ENCODE measurements at regions of chr18 and their contacts with region 1.

Region 1: DNA sequence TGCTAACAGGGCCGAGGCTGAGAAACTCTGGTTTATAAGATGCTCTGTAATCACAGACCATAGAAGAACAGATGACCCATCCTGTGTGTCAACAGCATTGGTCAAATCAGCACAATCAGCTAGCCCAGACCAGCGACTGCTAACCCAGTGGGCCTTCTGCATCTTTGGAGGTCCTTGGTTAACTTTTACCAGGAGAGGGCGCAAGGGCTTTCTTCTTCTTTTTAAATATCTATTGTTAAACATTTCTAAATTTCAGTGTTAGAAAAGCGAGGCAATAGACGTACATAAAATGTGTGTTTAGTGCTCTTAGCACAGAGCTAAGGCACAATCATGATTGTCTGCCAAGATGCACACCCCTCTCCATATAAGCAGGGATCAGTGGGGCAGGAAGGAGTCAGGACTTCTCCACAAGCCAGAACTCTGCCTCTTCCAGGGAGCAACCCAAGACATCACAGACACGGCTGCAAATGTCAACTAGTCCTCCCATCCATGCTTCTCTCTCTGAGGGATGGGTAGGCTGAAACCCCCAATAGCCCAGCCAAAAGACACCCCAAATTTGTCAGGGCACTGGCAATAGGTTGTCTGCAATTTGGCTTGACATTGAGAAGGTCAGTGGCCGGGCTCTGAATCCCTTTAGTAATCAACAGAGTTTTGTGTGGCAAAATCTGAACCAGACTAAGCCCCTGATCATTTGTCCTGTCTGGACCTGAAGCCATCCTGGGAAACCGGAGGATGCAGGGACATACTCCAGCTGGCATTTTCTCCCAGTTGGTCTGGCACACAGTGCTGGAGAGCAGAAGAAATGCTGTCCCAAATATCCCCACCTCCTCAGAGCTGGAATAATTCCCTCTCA is 188.2 kb downstream of the BCL2 start:
- DNase-seq: no peak

Region 2: GRCh38 chr18:63025251-63026090 is 105.9 kb before region 1 on chr18:
- intact Hi-C with region 1: loop called (anchors 5 kb)
- DNase-seq: no peak

Region 3: DNA sequence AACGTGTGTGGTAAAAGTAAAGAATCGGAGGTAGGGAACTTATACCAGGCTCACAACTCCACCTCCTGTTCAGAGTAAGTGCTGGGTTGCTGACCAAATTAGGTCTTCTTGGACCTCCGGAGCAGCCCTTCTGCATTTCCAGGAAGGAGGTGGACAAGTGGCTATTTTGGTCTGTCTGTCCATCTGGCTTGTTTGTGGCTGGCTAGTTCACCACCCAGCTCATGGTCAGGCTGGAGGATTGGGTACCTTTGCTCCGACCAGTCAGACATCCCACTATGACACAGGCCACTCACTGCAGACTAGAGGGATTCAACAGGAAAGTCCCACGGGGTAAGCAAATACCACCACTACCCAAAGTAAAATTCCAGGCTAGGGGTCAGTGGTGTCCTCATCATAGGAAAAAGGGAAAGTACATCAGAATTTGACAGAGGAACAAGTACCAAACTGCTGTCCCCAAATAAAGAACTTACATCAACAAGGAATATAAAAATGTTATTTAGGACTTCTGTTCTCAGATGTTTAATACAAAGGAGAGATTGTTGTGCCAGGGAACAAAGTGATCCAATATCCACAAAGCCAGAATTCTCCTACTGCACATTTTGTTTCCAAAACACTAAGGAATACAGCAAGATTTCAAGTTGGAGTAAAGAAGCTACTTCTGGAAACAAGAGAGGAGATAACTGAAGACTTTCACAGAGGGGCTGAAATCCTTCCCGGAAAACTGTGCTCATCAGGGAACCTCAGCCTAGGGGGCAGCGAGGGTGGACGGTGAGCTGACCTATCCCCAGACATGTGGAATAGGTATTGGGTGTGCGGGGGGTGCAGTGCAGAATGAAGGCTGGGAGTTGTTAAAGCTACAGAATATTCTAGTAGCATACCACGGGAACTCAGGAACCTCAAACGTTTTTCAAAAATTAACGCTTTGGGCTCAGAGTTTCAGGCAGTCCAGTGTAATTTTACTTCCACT is 131.3 kb after region 1 on chr18:
- intact Hi-C with region 1: loop called (anchors 1 kb)
- DNase-seq: no peak

Region 4: GRCh38 chr18:63427558-63427957 is 296.2 kb after region 1 on chr18:
- intact Hi-C with region 1: no loop called
- DNase-seq: no peak

Region 5: DNA sequence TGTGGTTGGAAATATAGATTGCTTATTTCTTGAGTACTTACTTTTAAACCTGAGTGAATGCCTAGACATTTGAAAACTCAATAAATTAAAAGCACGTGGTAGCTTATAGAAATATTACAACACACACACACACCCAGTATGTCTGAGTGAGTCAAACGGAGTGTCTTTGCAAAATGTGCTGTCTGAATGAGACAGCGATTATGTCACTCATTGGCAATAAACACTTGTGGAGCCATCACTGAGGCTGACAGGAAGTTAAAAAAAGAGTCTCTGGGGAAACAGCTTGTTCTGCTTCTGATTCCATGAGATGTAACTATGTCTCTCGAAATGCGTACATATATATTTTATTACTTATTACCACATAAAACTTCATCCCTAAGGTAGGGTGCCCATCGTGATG is 313.2 kb after region 1 on chr18:
- intact Hi-C with region 1: loop called (anchors 5 kb)
- DNase-seq: no peak

Measured in cardiac septum (tissue), 1 donor.